ENCODE measurements at regions of chr16 and their contacts with region 1.

Region 1: DNA sequence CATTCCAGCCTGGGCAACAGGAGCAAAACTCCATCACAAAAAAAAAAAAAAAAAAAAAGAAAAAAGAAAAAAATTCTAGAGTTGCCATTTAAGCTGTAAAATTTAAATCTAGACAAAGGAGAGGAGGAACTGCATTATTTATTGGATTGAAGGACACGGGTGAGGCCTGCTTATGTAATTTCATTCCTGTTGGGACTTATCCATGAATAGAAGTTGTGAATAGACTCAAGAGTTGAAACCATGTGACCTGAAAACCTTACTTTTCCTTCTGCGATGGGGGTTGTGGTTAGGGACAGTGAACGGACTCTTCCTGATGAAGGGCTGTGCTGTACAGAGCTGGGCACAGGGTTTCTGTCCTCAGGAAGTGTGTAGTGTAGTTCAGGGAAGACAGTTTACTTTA is 22.5 kb downstream of the BANP start:
- DNase-seq: no peak
- ATAC-seq: no peak
- H3K4me3 ChIP-seq: no peak overlapping the region
- H3K4me3 Mint-ChIP-seq: no peak overlapping the region
- H3K27ac ChIP-seq: no peak overlapping the region
- H3K27ac Mint-ChIP-seq: no peak overlapping the region
- H3K4me1 ChIP-seq: peaks cover 0 to 9% of the 10 kb centered on the region in 2 donors
- H3K4me1 Mint-ChIP-seq: peaks cover 27% of the 10 kb centered on the region
- H3K27me3 ChIP-seq: no peaks in the 10 kb centered on the region
- H3K27me3 Mint-ChIP-seq: no peaks in the 10 kb centered on the region
- CTCF ChIP-seq: no peak

Region 2: GRCh38 chr16:87765776-87766484 is 207.8 kb before region 1 on chr16 and contains the start of gene KLHDC4:
- CTCF ChIA-PET with region 1: no interaction called
- POLR2A ChIA-PET with region 1: no interaction called
- intact Hi-C with region 1: no loop called
- DNase-seq: peak; percentile 93
- ATAC-seq: peak; percentile 85
- H3K4me3 ChIP-seq: peak within 1 kb of the TSS; percentile 59 to 95 (median 78)
- H3K4me3 Mint-ChIP-seq: peak within 1 kb of the TSS; percentile 100
- H3K27ac ChIP-seq: peak within 1 kb of the TSS; percentile 93
- H3K27ac Mint-ChIP-seq: peak within 1 kb of the TSS; percentile 98
- H3K4me1 ChIP-seq: peaks cover 15 to 26% of the 10 kb centered on the region in 2 donors
- H3K4me1 Mint-ChIP-seq: peaks cover 36% of the 10 kb centered on the region
- H3K27me3 ChIP-seq: no peaks in the 10 kb centered on the region
- H3K27me3 Mint-ChIP-seq: no peaks in the 10 kb centered on the region
- CTCF ChIP-seq: no peak
- total RNA-seq, gene KLHDC4: 90.8 and 115 TPM in 2 replicates

Region 3: GRCh38 chr16:87993901-87994300 is 20.2 kb after region 1 on chr16:
- CTCF ChIA-PET with region 1: no interaction called
- POLR2A ChIA-PET with region 1: no interaction called
- intact Hi-C with region 1: no loop called
- DNase-seq: no peak
- ATAC-seq: no peak
- H3K4me3 ChIP-seq: no peak overlapping the region
- H3K4me3 Mint-ChIP-seq: no peak overlapping the region
- H3K27ac ChIP-seq: no peak overlapping the region
- H3K27ac Mint-ChIP-seq: no peak overlapping the region
- H3K4me1 ChIP-seq: no peaks in the 10 kb centered on the region
- H3K4me1 Mint-ChIP-seq: peaks cover 3% of the 10 kb centered on the region
- H3K27me3 ChIP-seq: no peaks in the 10 kb centered on the region
- H3K27me3 Mint-ChIP-seq: no peaks in the 10 kb centered on the region
- CTCF ChIP-seq: no peak

Region 4: GRCh38 chr16:88026964-88027938 is 53.5 kb after region 1 on chr16:
- CTCF ChIA-PET with region 1: no interaction called
- POLR2A ChIA-PET with region 1: no interaction called
- intact Hi-C with region 1: no loop called
- DNase-seq: no peak
- ATAC-seq: no peak
- H3K4me3 ChIP-seq: no peak overlapping the region
- H3K4me3 Mint-ChIP-seq: no peak overlapping the region
- H3K27ac ChIP-seq: no peak overlapping the region
- H3K27ac Mint-ChIP-seq: no peak overlapping the region
- H3K4me1 ChIP-seq: no peaks in the 10 kb centered on the region
- H3K4me1 Mint-ChIP-seq: peaks cover 9% of the 10 kb centered on the region
- H3K27me3 ChIP-seq: no peaks in the 10 kb centered on the region
- H3K27me3 Mint-ChIP-seq: no peaks in the 10 kb centered on the region
- CTCF ChIP-seq: no peak

Region 5: DNA sequence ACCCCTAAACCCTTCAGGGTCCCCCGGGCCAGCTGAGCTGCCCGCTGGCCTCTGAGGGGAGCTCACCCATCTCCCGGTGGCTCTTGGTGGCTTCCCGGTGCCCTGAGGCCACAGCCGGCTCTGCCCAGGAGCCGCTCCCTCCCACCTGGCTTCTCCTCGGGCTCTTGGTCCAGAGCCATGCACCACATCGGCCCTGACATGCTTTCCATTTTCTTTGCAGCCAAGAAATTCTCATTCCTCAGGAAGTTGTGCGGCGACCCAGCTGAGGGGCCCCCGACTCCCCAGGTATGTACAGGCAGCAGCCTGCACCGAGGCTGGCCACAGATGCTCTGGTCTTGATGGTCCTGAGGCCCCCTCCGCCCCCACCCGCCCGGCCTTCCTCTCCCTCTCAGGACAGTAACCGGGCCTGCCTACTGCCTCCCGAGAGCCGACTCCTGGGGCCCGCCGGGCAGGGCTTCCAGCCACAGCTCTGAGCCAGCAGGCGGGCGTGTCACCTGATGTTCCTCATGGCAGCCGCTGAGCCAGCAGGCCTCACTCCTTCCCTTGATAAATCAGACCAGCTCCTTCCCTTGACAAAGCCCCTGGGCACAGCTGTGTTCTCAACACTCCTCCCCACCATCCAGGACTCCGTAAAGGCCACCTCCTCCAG is 451.0 kb after region 1 on chr16:
- CTCF ChIA-PET with region 1: no interaction called
- POLR2A ChIA-PET with region 1: interaction called, 12 read pairs
- intact Hi-C with region 1: no loop called
- DNase-seq: no peak
- ATAC-seq: no peak
- H3K4me3 ChIP-seq: no peak overlapping the region
- H3K4me3 Mint-ChIP-seq: no peak overlapping the region
- H3K27ac ChIP-seq: no peak overlapping the region
- H3K27ac Mint-ChIP-seq: peak overlapping the region; percentile 11
- H3K4me1 ChIP-seq: peaks cover 4% of the 10 kb centered on the region in 2 donors
- H3K4me1 Mint-ChIP-seq: peaks cover 7% of the 10 kb centered on the region
- H3K27me3 ChIP-seq: peaks cover 0 to 2% (median 0%) of the 10 kb centered on the region in 4 experiments
- H3K27me3 Mint-ChIP-seq: no peaks in the 10 kb centered on the region
- CTCF ChIP-seq: no peak

Measured in B cell (primary cell).